Stomach (tissue), 19 donors: ENCODE measurements at regions of chr5 and their contacts with region 1.

Region 1: GRCh38 chr5:157328277-157328912 is 62.5 kb downstream of the CYFIP2 start:
- DNase-seq: peak; percentile 63 to 92
- H3K4me3 ChIP-seq: peak overlapping the region in 3 of 4 donors; percentile 6 to 23 (median 22)
- H3K27ac ChIP-seq: no peak overlapping the region
- H3K4me1 ChIP-seq: peaks cover 0 to 15% (median 8%) of the 10 kb centered on the region in 4 donors
- H3K27me3 ChIP-seq: no peaks in the 10 kb centered on the region
- CTCF ChIP-seq: peak in 5 of 7 experiments; percentile 74 to 89 (median 82)
- EP300 ChIP-seq: no peak
- POLR2A ChIP-seq: no peak

Region 2: GRCh38 chr5:156623381-156624040 is 704.9 kb before region 1 on chr5:
- intact Hi-C with region 1: no loop called
- DNase-seq: no peak
- H3K4me3 ChIP-seq: no peak overlapping the region
- H3K27ac ChIP-seq: no peak overlapping the region
- H3K4me1 ChIP-seq: no peaks in the 10 kb centered on the region
- H3K27me3 ChIP-seq: no peaks in the 10 kb centered on the region
- CTCF ChIP-seq: no peak
- EP300 ChIP-seq: no peak
- POLR2A ChIP-seq: no peak

Region 3: GRCh38 chr5:157476702-157477408 is 148.5 kb after region 1 on chr5:
- intact Hi-C with region 1: loop called (anchors 10 kb)
- DNase-seq: peak; percentile 43 to 87
- H3K4me3 ChIP-seq: no peak overlapping the region
- H3K27ac ChIP-seq: peak overlapping the region in 1 of 5 donors; percentile 75
- H3K4me1 ChIP-seq: peaks cover 0 to 49% (median 25%) of the 10 kb centered on the region in 4 donors
- H3K27me3 ChIP-seq: no peaks in the 10 kb centered on the region
- CTCF ChIP-seq: peak in 5 of 7 experiments; percentile 62 to 80 (median 67)
- EP300 ChIP-seq: no peak
- POLR2A ChIP-seq: no peak